Endothelial cell of umbilical vein (primary cell): ENCODE measurements at regions of chr3 and their contacts with region 1.

Region 1: DNA sequence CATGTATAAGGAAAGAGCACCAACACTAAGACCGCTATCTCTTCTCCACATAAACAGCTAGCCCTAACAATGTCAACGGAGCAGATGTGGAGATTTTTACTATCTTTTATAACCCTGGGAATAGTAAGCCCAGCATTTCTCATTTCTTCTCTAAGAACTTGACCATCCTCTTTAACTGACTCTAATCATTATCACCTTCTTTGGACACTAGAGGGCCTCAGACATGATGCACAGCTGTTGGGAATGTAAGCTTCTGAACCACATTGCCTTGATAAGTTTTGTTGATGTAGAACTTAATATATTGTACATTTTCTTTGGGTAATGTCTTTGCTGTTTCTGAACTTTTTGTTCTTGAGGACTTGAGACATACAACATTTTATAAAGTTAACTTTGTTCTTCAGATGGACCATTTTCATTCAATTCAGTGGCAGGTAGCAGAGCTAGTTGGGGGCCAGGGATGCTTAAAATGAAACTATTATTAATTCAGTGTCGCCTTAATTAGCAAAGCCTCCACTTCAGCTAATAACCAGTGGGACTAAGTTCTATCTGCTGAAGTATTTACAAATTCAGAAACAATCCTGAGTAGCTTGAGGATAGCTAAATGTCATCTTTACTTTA is 9.6 kb upstream of the TAGLN3 start:
- DNase-seq: peak; percentile 72
- H3K4me3 ChIP-seq: no peak overlapping the region
- H3K27ac ChIP-seq: no peak overlapping the region
- H3K4me1 ChIP-seq: no peaks in the 10 kb centered on the region
- H3K27me3 ChIP-seq: no peaks in the 10 kb centered on the region
- CTCF ChIP-seq: peak; percentile 55 to 60
- POLR2A ChIP-seq: no peak

Region 2: GRCh38 chr3:111761309-111761831 is 227.8 kb before region 1 on chr3:
- CTCF ChIA-PET with region 1: no interaction called
- POLR2A ChIA-PET with region 1: no interaction called
- dilution Hi-C with region 1: no loop called
- intact Hi-C with region 1: no loop called
- DNase-seq: peak; percentile 29
- H3K4me3 ChIP-seq: no peak overlapping the region
- H3K27ac ChIP-seq: no peak overlapping the region
- H3K4me1 ChIP-seq: no peaks in the 10 kb centered on the region
- H3K27me3 ChIP-seq: no peaks in the 10 kb centered on the region
- CTCF ChIP-seq: no peak
- POLR2A ChIP-seq: no peak

Region 3: DNA sequence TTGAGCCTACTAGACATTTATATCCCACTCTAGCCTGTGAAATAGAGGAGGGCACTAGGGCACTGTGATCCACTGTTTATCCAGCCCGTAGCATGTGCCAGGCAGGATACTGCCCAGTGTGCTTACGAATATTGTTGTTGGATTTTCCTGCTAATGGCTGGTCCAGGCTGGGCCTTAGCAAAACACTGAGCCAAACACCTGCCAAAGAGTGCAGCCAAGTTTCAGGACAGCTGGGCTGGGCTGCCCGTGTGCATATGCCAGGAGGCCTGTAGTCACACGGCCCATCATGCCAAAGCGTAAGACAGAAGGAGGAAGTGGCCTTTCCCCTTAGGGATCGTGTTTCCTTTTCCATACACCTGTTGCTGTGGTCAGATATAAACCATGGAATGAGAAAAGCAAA is 64.9 kb before region 1 on chr3:
- CTCF ChIA-PET with region 1: no interaction called
- POLR2A ChIA-PET with region 1: no interaction called
- dilution Hi-C with region 1: no loop called
- intact Hi-C with region 1: no loop called
- DNase-seq: peak; percentile 99
- H3K4me3 ChIP-seq: no peak overlapping the region
- H3K27ac ChIP-seq: peak overlapping the region; percentile 69
- H3K4me1 ChIP-seq: peaks cover 29% of the 10 kb centered on the region
- H3K27me3 ChIP-seq: no peaks in the 10 kb centered on the region
- CTCF ChIP-seq: no peak
- POLR2A ChIP-seq: no peak

Region 4: GRCh38 chr3:111978493-111979433 is 10.4 kb before region 1 on chr3 and contains the start of gene ABHD10:
- CTCF ChIA-PET with region 1: interaction called, 50 read pairs
- POLR2A ChIA-PET with region 1: interaction called, 3 read pairs
- dilution Hi-C with region 1: no loop called
- intact Hi-C with region 1: no loop called
- DNase-seq: peak; percentile 99
- H3K4me3 ChIP-seq: peak within 1 kb of the TSS; percentile 80 to 96 (median 96)
- H3K27ac ChIP-seq: peak within 1 kb of the TSS; percentile 33
- H3K4me1 ChIP-seq: peaks cover 21% of the 10 kb centered on the region
- H3K27me3 ChIP-seq: no peaks in the 10 kb centered on the region
- CTCF ChIP-seq: no peak
- POLR2A ChIP-seq: peak; percentile 90
- total RNA-seq, gene ABHD10: 26.2 and 37.0 TPM in 2 replicates